GM12878 (cell line): ENCODE measurements at regions of chr4 and their contacts with region 1.

Region 1: DNA sequence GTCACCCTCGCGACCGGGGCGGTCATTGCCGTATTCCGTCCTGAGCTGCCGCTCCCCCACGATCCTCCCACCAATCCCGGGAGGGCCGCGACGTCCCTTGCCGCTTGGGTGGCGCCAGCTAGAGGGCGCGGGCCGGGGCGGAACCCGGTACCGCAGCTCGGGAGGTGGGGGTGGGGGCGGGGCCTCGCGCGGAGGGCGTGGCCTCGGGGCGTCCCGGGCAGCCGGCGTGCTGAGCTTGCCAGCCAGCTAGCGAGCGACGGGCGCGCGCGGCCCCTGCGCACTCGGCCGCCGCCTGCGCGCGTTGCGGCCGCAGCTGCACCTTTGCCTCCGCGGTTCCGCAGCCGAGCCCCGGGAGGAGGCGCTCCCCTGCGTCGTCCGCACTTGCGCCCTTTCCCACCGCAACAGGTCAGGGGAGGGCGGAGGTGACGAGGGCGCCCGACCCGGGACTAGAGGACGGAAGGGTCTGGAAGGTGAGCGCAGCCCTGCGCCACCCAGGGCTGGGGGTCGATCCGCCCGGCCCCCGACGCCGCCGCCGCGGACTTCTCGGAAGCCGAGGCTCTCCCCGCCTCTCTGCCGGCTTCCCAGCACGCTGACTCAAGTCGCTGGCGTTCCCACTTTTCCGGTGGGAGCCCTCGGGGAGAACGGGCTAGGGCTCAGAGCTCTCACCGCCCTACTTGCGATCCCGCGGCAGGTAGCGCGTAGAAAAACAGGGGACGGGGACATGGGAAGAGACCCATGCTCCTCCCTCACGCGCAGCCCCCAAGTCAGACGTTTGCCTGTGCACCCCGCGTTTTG is at the start of gene AFF1:
- DNase-seq: peak; percentile 71
- ATAC-seq: peak; percentile 72
- H3K4me3 ChIP-seq: peak within 1 kb of the TSS; percentile 91
- H3K27ac ChIP-seq: peak within 1 kb of the TSS; percentile 93
- H3K4me1 ChIP-seq: peaks cover 3% of the 10 kb centered on the region; the same call in 1 of the 2 replicates
- H3K27me3 ChIP-seq: no peaks in the 10 kb centered on the region
- CTCF ChIP-seq: peak in 2 of 3 experiments; percentile 30 to 32; a peak in 4 of 6 replicates
- EP300 ChIP-seq: no peak
- POLR2A ChIP-seq: peak; percentile 96
- RAD21 ChIP-seq: peak; percentile 17; the same call in 1 of the 2 replicates
- polyA plus RNA-seq, gene AFF1: 3.5 to 11.4 TPM

Region 2: GRCh38 chr4:86961605-86962295 is 26.8 kb after region 1 on chr4:
- CTCF ChIA-PET with region 1: interaction called, 45 read pairs
- POLR2A ChIA-PET with region 1: interaction called, 107 read pairs
- RAD21 ChIA-PET with region 1: interaction called, 103 read pairs
- SMC1A ChIA-PET with region 1: interaction called, 192 read pairs
- in situ Hi-C with region 1: no loop called
- intact Hi-C with region 1: loop called (anchors 1 kb)
- DNase-seq: peak; percentile 85
- ATAC-seq: peak; percentile 92
- H3K4me3 ChIP-seq: peak overlapping the region; percentile 61; the same call in 1 of the 2 replicates
- H3K27ac ChIP-seq: peak overlapping the region; percentile 80
- H3K4me1 ChIP-seq: peaks cover 70% of the 10 kb centered on the region
- H3K27me3 ChIP-seq: no peaks in the 10 kb centered on the region
- CTCF ChIP-seq: no peak
- EP300 ChIP-seq: peak; percentile 79 to 84; a peak in 3 of 4 replicates
- POLR2A ChIP-seq: peak; percentile 63
- RAD21 ChIP-seq: no peak

Region 3: GRCh38 chr4:86999136-86999643 is 64.2 kb after region 1 on chr4:
- CTCF ChIA-PET with region 1: interaction called, 30 read pairs
- POLR2A ChIA-PET with region 1: interaction called, 123 read pairs
- RAD21 ChIA-PET with region 1: interaction called, 267 read pairs
- SMC1A ChIA-PET with region 1: interaction called, 268 read pairs
- in situ Hi-C with region 1: no loop called
- intact Hi-C with region 1: no loop called
- DNase-seq: no peak
- ATAC-seq: no peak
- H3K4me3 ChIP-seq: no peak overlapping the region
- H3K27ac ChIP-seq: no peak overlapping the region; the same call in 1 of the 2 replicates
- H3K4me1 ChIP-seq: peaks cover 29% of the 10 kb centered on the region
- H3K27me3 ChIP-seq: no peaks in the 10 kb centered on the region
- CTCF ChIP-seq: no peak
- EP300 ChIP-seq: no peak
- POLR2A ChIP-seq: no peak
- RAD21 ChIP-seq: no peak

Region 4: GRCh38 chr4:87026800-87027495 is 92.0 kb after region 1 on chr4:
- CTCF ChIA-PET with region 1: interaction called, 4 read pairs
- POLR2A ChIA-PET with region 1: interaction called, 5 read pairs
- RAD21 ChIA-PET with region 1: interaction called, 12 read pairs
- SMC1A ChIA-PET with region 1: interaction called, 8 read pairs
- in situ Hi-C with region 1: no loop called
- intact Hi-C with region 1: loop called (anchors 1 kb)
- DNase-seq: peak; percentile 91
- ATAC-seq: peak; percentile 92
- H3K4me3 ChIP-seq: peak overlapping the region; percentile 8; the same call in 1 of the 2 replicates
- H3K27ac ChIP-seq: peak overlapping the region; percentile 98
- H3K4me1 ChIP-seq: peaks cover 46% of the 10 kb centered on the region
- H3K27me3 ChIP-seq: no peaks in the 10 kb centered on the region
- CTCF ChIP-seq: no peak
- EP300 ChIP-seq: peak; percentile 68 to 73; a peak in 2 of 4 replicates
- POLR2A ChIP-seq: no peak
- RAD21 ChIP-seq: peak; percentile 30; the same call in 1 of the 2 replicates

Region 5: DNA sequence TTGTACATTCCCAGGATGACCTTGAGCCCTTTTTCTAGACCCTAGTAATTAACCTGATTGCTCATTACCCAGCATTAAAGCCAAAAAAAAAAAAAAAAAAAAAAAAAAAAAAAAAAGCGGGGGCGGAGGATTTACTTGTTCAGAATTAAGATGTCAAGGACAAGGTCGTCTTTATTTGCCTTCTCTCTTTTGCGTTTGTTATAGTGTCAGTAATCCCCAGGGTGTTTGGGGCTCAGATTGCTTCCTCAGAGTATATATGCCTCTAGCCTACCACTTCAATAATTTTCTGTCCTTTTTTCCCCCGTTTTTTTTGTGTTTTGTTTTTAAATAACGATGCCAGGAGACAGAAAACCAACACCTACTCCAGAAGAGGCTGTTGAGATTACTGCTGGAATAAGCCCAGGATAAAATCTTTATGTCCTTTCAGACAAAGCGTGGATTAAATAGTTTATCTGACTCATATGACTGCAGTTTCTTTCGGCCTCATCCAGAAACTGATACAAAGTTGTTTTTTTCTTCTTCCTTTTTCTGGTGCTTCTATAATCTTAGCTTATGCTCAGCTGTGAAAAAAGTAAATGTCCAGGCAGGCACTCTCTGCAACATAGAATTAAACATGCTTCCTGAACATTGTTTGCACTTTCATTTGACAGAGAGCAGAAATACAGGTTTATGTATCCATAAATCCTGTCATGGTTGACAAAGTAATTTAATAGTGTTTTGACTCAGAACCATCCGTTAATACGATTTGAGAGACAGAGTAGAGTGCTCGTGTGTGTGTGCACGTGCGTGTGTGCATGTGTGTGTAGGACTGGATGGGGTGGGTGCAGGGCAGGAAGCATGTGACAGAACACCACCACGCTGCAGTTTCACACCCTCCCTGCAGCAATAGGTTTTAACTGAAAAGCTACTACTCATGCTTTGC is 138.5 kb after region 1 on chr4:
- CTCF ChIA-PET with region 1: interaction called, 11 read pairs
- POLR2A ChIA-PET with region 1: interaction called, 10 read pairs
- RAD21 ChIA-PET with region 1: interaction called, 19 read pairs
- SMC1A ChIA-PET with region 1: interaction called, 13 read pairs
- in situ Hi-C with region 1: no loop called
- intact Hi-C with region 1: loop called (anchors 5 kb)
- DNase-seq: peak; percentile 93
- ATAC-seq: peak; percentile 93
- H3K4me3 ChIP-seq: peak overlapping the region; percentile 65; the same call in 1 of the 2 replicates
- H3K27ac ChIP-seq: peak overlapping the region; percentile 98
- H3K4me1 ChIP-seq: peaks cover 17% of the 10 kb centered on the region
- H3K27me3 ChIP-seq: no peaks in the 10 kb centered on the region
- CTCF ChIP-seq: no peak
- EP300 ChIP-seq: peak; percentile 65 to 67; a peak in 3 of 4 replicates
- POLR2A ChIP-seq: peak; percentile 62
- RAD21 ChIP-seq: no peak

Region 6: DNA sequence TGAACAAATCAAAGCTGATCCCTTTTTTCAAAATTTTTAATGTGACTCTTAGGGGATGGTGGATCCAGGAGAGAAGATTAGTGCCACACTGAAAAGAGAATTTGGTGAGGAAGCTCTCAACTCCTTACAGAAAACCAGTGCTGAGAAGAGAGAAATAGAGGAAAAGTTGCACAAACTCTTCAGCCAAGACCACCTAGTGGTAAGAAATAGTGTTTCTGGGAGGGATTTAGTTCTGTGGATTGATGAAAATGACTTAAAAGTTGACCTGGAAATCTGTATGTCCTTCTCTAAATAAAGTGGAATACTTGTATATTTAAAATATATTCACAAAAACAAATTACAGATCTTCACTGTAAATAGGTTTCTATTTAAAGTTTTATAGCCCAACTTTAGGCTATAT is 516.6 kb after region 1 on chr4:
- CTCF ChIA-PET with region 1: no interaction called
- POLR2A ChIA-PET with region 1: no interaction called
- RAD21 ChIA-PET with region 1: no interaction called
- SMC1A ChIA-PET with region 1: no interaction called
- in situ Hi-C with region 1: no loop called
- intact Hi-C with region 1: no loop called
- DNase-seq: no peak
- ATAC-seq: no peak
- H3K4me3 ChIP-seq: no peak overlapping the region
- H3K27ac ChIP-seq: no peak overlapping the region
- H3K4me1 ChIP-seq: no peaks in the 10 kb centered on the region
- H3K27me3 ChIP-seq: no peaks in the 10 kb centered on the region
- CTCF ChIP-seq: peak in 2 of 3 experiments; percentile 7 to 13; a peak in 1 of 6 replicates
- EP300 ChIP-seq: no peak
- POLR2A ChIP-seq: no peak
- RAD21 ChIP-seq: no peak

Region 7: DNA sequence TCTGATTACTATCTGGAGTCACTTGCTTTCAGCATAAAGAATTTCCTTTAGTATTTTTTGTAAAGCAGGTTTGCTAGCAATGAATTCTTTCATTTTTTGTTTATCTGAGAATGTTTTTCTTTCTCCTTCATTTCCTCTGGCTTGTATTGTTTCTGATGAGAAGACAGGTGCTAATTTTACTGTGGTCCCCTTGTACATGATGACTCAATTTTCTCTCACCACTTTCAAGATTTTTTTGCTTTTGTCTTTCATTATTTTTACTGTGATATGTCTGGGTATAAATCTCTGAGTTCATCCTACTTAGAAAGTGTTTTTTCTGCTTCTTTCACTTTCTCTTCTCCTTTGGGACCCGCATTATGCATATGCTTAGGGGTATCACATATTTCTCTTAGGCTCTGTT is 1135.1 kb after region 1 on chr4:
- CTCF ChIA-PET with region 1: no interaction called
- POLR2A ChIA-PET with region 1: no interaction called
- RAD21 ChIA-PET with region 1: no interaction called
- SMC1A ChIA-PET with region 1: no interaction called
- in situ Hi-C with region 1: no loop called
- intact Hi-C with region 1: no loop called
- DNase-seq: no peak
- ATAC-seq: no peak
- H3K4me3 ChIP-seq: no peak overlapping the region
- H3K27ac ChIP-seq: no peak overlapping the region
- H3K4me1 ChIP-seq: no peaks in the 10 kb centered on the region
- H3K27me3 ChIP-seq: no peaks in the 10 kb centered on the region
- CTCF ChIP-seq: no peak
- EP300 ChIP-seq: no peak
- POLR2A ChIP-seq: no peak
- RAD21 ChIP-seq: no peak